Left ventricle myocardium inferior (tissue), 1 donor: ENCODE measurements at regions of chr7 and their contacts with region 1.

Region 1: DNA sequence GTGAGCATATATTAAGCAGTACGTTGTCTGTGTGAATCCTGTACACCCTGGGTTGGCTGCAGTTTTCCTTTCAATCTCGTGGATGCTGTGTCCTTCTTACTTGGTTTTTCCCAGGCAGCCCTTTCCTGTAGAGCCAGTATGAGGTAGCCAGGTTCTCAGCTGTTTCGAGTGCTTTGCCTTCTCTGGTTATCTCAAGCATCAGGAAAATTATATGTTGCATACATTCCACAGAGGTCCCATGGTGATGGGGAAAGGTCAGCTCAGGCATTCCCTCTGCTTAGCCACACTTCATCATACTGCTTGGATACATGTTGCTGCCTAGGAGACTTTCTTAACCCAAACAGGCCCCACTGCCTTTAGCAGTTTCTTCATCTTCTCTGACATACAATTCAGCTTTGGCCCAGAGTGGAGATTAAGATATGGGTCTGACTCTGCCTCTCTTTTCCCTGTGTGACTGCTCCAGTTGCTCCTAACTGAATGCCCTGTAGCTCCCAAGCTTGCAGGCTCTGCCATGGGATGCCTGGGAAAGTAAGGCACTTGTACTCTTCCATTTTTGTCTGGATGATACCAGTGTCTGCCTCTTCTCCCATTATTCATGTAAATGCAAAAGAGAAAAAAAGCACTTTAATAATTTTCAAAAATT is 11.3 kb downstream of the GNAI1 start:
- DNase-seq: no peak
- H3K4me3 ChIP-seq: peak overlapping the region; percentile 12
- H3K27ac ChIP-seq: no peak overlapping the region
- H3K4me1 ChIP-seq: peaks cover 39% of the 10 kb centered on the region
- H3K27me3 ChIP-seq: no peaks in the 10 kb centered on the region
- CTCF ChIP-seq: no peak

Region 2: DNA sequence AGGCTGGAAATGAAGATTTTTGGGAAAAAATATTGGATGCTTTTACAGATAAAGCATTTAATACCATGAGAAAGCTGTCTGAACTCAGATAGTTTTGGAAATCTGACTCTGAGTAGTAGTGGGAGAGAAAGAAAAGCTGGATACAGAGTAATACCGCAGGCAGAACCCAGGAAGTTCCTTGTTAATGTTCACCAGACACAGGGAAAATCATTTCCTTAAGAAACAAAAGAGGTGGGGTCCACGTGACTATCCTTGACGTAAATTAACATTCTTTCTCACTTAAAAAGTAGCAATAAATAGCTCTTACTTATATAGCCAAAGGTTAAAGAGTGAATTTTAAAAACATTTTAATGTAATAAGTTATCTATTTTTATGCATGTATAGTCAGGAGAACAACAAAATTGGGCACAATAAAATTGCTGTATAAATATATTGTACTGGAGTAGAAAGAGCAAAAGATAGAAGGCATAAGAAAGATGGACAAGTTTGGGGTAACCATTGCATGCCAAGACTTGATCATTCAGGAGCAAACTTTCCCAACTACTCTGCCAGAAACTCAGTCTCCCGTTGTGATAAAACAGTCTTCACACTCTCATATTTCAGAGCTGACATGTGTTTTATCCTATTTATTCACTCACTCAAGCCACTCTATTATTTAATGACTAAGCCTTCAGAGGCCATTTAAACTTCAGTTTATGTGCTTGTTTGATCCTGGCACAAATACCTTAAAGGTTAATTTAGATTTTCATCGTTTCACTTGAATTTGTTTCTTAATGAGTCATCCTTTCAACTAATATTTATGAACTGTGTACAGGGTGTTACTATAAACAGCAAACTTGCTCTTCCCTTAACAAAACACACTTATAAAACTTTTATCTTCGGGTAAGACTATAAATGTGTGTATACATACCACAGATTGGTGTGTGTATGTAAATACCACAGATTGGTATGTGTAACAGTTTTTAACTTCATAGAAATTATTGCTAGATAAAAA is 131.8 kb after region 1 on chr7:
- intact Hi-C with region 1: loop called (anchors 10 kb)
- DNase-seq: no peak
- H3K4me3 ChIP-seq: no peak overlapping the region
- H3K27ac ChIP-seq: peak overlapping the region; percentile 66
- H3K4me1 ChIP-seq: peaks cover 62% of the 10 kb centered on the region
- H3K27me3 ChIP-seq: no peaks in the 10 kb centered on the region
- CTCF ChIP-seq: no peak

Region 3: DNA sequence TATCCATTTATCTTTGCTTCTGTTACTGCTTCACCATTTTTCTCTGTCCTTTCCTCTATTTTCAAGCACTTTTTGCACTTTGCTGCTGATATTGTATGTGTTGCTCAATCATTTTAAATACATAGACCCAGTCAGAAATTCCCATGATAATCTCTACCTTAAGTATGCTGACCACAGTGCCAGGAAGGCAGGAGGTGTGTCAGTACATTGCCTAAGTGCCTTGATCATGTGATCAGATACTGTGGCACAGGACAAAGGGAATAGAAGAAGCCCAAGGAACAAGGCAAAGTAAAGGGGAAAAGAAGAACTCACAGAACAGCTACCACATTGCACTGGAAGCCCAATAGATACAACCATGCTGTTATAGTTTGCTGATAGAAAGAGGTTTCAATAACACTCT is 438.9 kb after region 1 on chr7:
- intact Hi-C with region 1: no loop called
- DNase-seq: no peak
- H3K4me3 ChIP-seq: no peak overlapping the region
- H3K27ac ChIP-seq: peak overlapping the region; percentile 86
- H3K4me1 ChIP-seq: peaks cover 62% of the 10 kb centered on the region
- H3K27me3 ChIP-seq: no peaks in the 10 kb centered on the region
- CTCF ChIP-seq: no peak